ENCODE measurements at regions of chr9 and their contacts with region 1.

Region 1: GRCh38 chr9:2014696-2015580 is at the start of gene SMARCA2:
- DNase-seq: peak; percentile 94
- ATAC-seq: peak; percentile 82
- H3K4me3 Mint-ChIP-seq: peak within 1 kb of the TSS; percentile 99
- H3K27ac Mint-ChIP-seq: peak within 1 kb of the TSS; percentile 98
- H3K4me1 Mint-ChIP-seq: peaks cover 28% of the 10 kb centered on the region
- H3K27me3 Mint-ChIP-seq: peaks cover 8% of the 10 kb centered on the region
- CTCF ChIP-seq: no peak
- total RNA-seq, gene SMARCA2: 235 and 238 TPM in 2 replicates

Region 2: GRCh38 chr9:1875921-1876448 is 139.0 kb before region 1 on chr9:
- CTCF ChIA-PET with region 1: no interaction called
- POLR2A ChIA-PET with region 1: interaction called, 25 read pairs
- intact Hi-C with region 1: loop called (anchors 2 kb)
- DNase-seq: peak; percentile 24
- ATAC-seq: peak; percentile 59
- H3K4me3 Mint-ChIP-seq: peak overlapping the region; percentile 46
- H3K27ac Mint-ChIP-seq: peak overlapping the region; percentile 95
- H3K4me1 Mint-ChIP-seq: peaks cover 30% of the 10 kb centered on the region
- H3K27me3 Mint-ChIP-seq: no peaks in the 10 kb centered on the region
- CTCF ChIP-seq: no peak

Region 3: GRCh38 chr9:2000314-2000713 is 14.6 kb before region 1 on chr9:
- CTCF ChIA-PET with region 1: no interaction called
- POLR2A ChIA-PET with region 1: no interaction called
- intact Hi-C with region 1: loop called (anchors 1 kb)
- DNase-seq: no peak
- ATAC-seq: no peak
- H3K4me3 Mint-ChIP-seq: no peak overlapping the region
- H3K27ac Mint-ChIP-seq: no peak overlapping the region
- H3K4me1 Mint-ChIP-seq: peaks cover 13% of the 10 kb centered on the region
- H3K27me3 Mint-ChIP-seq: peaks cover 6% of the 10 kb centered on the region
- CTCF ChIP-seq: no peak

Region 4: DNA sequence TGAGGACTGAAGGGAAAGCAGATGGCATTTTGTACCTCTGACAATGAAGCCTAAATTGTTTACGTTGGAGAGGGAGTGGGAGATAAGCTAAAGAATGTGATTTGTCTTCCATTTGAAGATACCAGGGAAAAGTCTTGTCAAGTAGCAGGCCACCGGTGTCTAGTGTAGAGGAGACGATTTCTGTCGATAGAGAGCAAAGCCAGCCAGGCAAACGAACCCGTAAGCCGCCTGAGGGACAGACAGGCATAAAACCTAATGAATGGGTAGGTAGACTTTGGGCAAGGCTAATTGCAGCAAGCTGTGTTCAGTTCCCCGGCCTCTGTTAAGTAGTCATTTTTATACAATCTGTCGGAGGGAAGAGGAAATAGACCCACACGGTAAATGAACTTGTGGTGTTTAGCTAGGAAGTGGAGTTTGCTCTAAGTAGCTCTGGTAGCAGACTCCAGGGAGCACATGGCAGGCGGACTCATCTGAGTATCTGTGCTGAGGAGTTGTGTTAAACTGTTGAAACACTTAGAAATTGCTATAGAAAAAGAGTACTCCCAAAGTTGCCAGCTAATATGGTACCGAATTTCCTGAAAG is 29.0 kb after region 1 on chr9:
- CTCF ChIA-PET with region 1: no interaction called
- POLR2A ChIA-PET with region 1: interaction called, 56 read pairs
- intact Hi-C with region 1: loop called (anchors 1 kb)
- DNase-seq: no peak
- ATAC-seq: peak; percentile 79
- H3K4me3 Mint-ChIP-seq: peak overlapping the region; percentile 70
- H3K27ac Mint-ChIP-seq: peak overlapping the region; percentile 90
- H3K4me1 Mint-ChIP-seq: peaks cover 44% of the 10 kb centered on the region
- H3K27me3 Mint-ChIP-seq: no peaks in the 10 kb centered on the region
- CTCF ChIP-seq: no peak

Region 5: GRCh38 chr9:2087500-2088313 is 72.8 kb after region 1 on chr9:
- CTCF ChIA-PET with region 1: interaction called, 4 read pairs
- POLR2A ChIA-PET with region 1: interaction called, 3 read pairs
- intact Hi-C with region 1: loop called (anchors 1 kb)
- DNase-seq: no peak
- ATAC-seq: peak; percentile 83
- H3K4me3 Mint-ChIP-seq: no peak overlapping the region
- H3K27ac Mint-ChIP-seq: no peak overlapping the region
- H3K4me1 Mint-ChIP-seq: no peaks in the 10 kb centered on the region
- H3K27me3 Mint-ChIP-seq: no peaks in the 10 kb centered on the region
- CTCF ChIP-seq: peak; percentile 40

Region 6: GRCh38 chr9:2241836-2242741 is 227.2 kb after region 1 on chr9:
- CTCF ChIA-PET with region 1: no interaction called
- POLR2A ChIA-PET with region 1: no interaction called
- intact Hi-C with region 1: no loop called
- DNase-seq: peak; percentile 52
- ATAC-seq: peak; percentile 94
- H3K4me3 Mint-ChIP-seq: peak overlapping the region; percentile 74
- H3K27ac Mint-ChIP-seq: no peak overlapping the region
- H3K4me1 Mint-ChIP-seq: peaks cover 20% of the 10 kb centered on the region
- H3K27me3 Mint-ChIP-seq: peaks cover 29% of the 10 kb centered on the region
- CTCF ChIP-seq: no peak

Region 7: GRCh38 chr9:2448193-2448738 is 433.3 kb after region 1 on chr9:
- CTCF ChIA-PET with region 1: no interaction called
- POLR2A ChIA-PET with region 1: no interaction called
- intact Hi-C with region 1: no loop called
- DNase-seq: no peak
- ATAC-seq: no peak
- H3K4me3 Mint-ChIP-seq: no peak overlapping the region
- H3K27ac Mint-ChIP-seq: no peak overlapping the region
- H3K4me1 Mint-ChIP-seq: no peaks in the 10 kb centered on the region
- H3K27me3 Mint-ChIP-seq: no peaks in the 10 kb centered on the region
- CTCF ChIP-seq: no peak

Region 8: GRCh38 chr9:2655411-2655901 is 640.5 kb after region 1 on chr9:
- CTCF ChIA-PET with region 1: no interaction called
- POLR2A ChIA-PET with region 1: no interaction called
- intact Hi-C with region 1: loop called (anchors 5 kb)
- DNase-seq: no peak
- ATAC-seq: no peak
- H3K4me3 Mint-ChIP-seq: no peak overlapping the region
- H3K27ac Mint-ChIP-seq: no peak overlapping the region
- H3K4me1 Mint-ChIP-seq: peaks cover 10% of the 10 kb centered on the region
- H3K27me3 Mint-ChIP-seq: peaks cover 18% of the 10 kb centered on the region
- CTCF ChIP-seq: no peak

Region 9: GRCh38 chr9:3473405-3473804 is 1458.5 kb after region 1 on chr9:
- CTCF ChIA-PET with region 1: no interaction called
- POLR2A ChIA-PET with region 1: no interaction called
- intact Hi-C with region 1: loop called (anchors 2 kb)
- DNase-seq: no peak
- ATAC-seq: peak; percentile 75
- H3K4me3 Mint-ChIP-seq: peak overlapping the region; percentile 5
- H3K27ac Mint-ChIP-seq: peak overlapping the region; percentile 68
- H3K4me1 Mint-ChIP-seq: peaks cover 59% of the 10 kb centered on the region
- H3K27me3 Mint-ChIP-seq: no peaks in the 10 kb centered on the region
- CTCF ChIP-seq: no peak